ENCODE measurements at regions of chr4 and their contacts with region 1.

Region 1: DNA sequence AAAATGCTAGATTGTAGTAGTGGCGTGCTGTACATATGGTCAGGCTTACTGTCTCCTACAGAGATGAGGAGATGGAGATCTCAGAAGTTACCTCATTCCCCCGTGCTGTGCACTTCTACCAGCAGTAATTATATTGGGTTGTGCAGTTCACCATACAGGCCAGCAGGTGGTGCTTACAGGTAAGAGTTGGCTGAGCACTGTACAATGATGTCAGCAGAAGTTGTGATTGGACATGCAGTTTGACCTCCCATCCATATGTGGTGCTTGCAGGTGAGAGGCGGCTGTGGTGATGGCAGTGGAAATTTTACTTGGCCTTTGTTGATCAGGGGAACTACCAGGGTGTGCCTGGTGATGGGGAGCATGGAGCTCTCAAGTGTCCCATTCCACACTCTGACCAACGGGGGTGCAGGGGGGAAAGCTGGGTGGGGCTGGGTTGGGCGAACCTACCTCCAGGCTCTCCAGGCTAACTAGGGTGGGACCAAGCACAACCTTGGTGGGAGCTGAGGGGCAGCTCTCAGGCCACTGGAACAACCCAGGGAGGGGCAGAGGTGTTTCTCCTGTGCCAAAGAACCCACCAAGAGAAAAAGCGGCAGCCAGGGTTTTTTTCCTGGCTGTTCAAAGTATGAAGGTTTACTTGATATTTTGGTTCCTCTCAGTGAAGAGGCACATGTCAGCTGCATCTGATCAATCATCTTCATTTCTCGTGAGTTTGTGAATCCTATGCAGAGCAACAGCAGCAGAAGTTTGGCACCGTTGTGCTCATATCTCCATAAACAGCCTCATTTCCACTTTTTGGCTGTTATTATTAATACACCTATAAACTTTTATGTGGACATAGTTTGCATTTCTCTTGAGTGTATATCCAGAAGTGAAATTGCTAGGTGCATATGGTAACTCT is 73.8 kb upstream of the FREM3 start:
- DNase-seq: peak; percentile 41
- ATAC-seq: peak; percentile 89
- H3K4me3 ChIP-seq: no peak overlapping the region
- H3K27ac ChIP-seq: no peak overlapping the region
- H3K4me1 ChIP-seq: no peaks in the 10 kb centered on the region
- H3K27me3 ChIP-seq: no peaks in the 10 kb centered on the region
- CTCF ChIP-seq: peak; percentile 49
- POLR2A ChIP-seq: no peak
- RAD21 ChIP-seq: peak; percentile 39

Region 2: DNA sequence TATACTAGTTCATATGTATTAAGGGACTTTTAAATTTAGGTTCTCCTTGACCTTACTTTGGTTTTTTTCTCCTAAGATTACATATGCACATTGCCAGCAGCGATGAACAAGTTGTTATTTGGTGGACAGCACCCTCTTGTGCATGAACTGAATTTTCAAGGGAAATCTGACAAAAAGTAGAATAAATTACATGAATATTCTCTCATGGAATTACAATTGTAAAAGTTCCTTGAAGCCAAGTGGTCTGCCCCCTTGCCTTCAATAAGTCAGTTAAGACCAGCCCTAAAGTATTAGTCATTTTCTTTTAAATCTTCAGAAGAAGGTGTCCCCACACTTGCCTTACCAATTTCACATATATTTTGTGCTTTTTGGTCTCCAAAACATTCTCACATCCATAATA is 291.4 kb before region 1 on chr4:
- CTCF ChIA-PET with region 1: no interaction called
- POLR2A ChIA-PET with region 1: no interaction called
- dilution Hi-C with region 1: no loop called
- in situ Hi-C with region 1: no loop called
- intact Hi-C with region 1: no loop called
- DNase-seq: peak; percentile 71
- ATAC-seq: peak; percentile 56
- H3K4me3 ChIP-seq: no peak overlapping the region
- H3K27ac ChIP-seq: no peak overlapping the region
- H3K4me1 ChIP-seq: no peaks in the 10 kb centered on the region
- H3K27me3 ChIP-seq: no peaks in the 10 kb centered on the region
- CTCF ChIP-seq: peak; percentile 84
- POLR2A ChIP-seq: no peak
- RAD21 ChIP-seq: peak; percentile 92

Region 3: DNA sequence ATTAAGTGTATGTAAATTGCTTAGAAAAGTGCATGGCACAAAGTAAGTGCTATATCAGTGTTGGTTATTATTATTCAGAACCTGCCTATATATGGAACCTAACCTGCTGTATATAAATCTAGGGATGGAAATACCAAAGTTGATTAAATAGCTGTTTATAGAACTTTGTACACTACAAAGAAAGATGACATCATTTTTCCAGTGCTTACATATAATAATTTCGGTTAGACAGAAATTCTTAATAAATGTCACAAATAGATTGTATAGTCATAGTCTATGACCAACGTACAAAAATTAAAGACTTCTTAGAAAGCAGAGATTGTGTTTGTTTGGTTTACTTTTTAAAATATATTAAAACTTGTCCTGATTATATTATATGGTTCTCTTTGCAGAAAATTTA is 240.6 kb after region 1 on chr4:
- CTCF ChIA-PET with region 1: no interaction called
- POLR2A ChIA-PET with region 1: no interaction called
- dilution Hi-C with region 1: no loop called
- in situ Hi-C with region 1: no loop called
- intact Hi-C with region 1: loop called (anchors 2 kb)
- DNase-seq: no peak
- ATAC-seq: no peak
- H3K4me3 ChIP-seq: no peak overlapping the region
- H3K27ac ChIP-seq: no peak overlapping the region
- H3K4me1 ChIP-seq: no peaks in the 10 kb centered on the region
- H3K27me3 ChIP-seq: no peaks in the 10 kb centered on the region
- CTCF ChIP-seq: no peak
- POLR2A ChIP-seq: no peak
- RAD21 ChIP-seq: no peak

Region 4: DNA sequence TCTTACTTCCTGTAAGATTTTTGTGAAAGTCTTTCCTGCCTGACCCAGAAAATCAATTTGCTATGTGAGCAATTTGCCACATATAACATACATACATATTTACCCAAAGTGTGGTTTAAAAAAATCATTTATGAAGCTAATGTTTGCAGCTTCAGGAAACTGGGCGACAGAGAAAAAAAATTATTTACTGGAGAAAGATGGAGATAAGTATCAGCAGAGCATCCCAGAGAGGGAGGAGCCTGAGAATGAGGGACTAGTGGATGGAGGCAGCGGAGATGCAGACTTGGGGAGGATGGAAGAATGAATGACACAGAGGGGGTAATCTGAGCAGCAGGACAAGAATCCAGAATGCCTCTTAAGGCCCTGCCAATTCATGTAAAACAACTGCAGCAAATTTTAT is 367.2 kb after region 1 on chr4:
- CTCF ChIA-PET with region 1: no interaction called
- POLR2A ChIA-PET with region 1: no interaction called
- dilution Hi-C with region 1: no loop called
- in situ Hi-C with region 1: no loop called
- intact Hi-C with region 1: loop called (anchors 5 kb)
- DNase-seq: no peak
- ATAC-seq: no peak
- H3K4me3 ChIP-seq: no peak overlapping the region
- H3K27ac ChIP-seq: no peak overlapping the region
- H3K4me1 ChIP-seq: no peaks in the 10 kb centered on the region
- H3K27me3 ChIP-seq: no peaks in the 10 kb centered on the region
- CTCF ChIP-seq: no peak
- POLR2A ChIP-seq: no peak
- RAD21 ChIP-seq: no peak